ENCODE measurements at regions of chr3 and their contacts with region 1.

Region 1: GRCh38 chr3:87426918-87427317 is 150.5 kb upstream of the POU1F1 start:
- DNase-seq: no peak

Region 2: DNA sequence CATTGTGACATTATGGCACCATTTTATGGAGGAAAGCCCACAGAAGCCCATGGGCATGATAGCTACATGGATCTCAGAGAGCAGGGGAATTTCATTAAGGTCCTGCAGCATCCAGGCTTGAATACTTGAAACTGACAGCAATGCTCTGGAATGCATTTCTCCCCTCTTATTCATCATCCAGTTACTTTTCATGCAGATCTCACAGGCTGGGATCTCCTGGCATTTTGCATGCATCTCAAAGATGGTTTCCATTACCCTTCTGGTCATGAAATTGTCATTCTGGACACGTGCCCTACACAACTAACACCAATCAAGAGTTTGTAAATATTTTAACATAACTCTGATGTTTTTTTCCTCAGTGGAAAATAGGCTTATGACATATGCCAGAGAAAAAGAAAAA is 468.4 kb before region 1 on chr3:
- intact Hi-C with region 1: no loop called
- DNase-seq: no peak

Region 3: DNA sequence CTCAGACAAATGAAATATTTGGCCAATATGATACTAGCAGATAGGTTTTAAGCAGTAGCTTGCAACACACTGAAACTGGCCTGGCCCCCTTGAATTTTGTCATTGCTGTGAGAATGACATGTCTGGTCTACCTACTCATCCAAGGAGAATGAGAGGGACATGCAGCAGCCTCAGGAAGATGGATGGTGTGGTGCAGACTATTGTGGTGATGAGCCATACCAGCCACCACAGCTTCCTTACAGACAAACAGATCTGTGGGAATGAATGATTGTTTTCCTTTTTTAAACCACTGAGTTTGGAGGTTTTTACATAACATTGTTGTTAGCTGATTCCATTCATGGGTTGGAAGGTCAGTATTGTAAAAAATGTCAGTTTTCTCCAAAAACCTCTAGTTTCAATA is 16.8 kb before region 1 on chr3:
- intact Hi-C with region 1: loop called in 1 of 2 experiments (anchors 1 kb)
- DNase-seq: no peak

Measured in posterior vena cava (tissue), 2 donors.